B cell (primary cell): ENCODE measurements at regions of chr17 and their contacts with region 1.

Region 1: DNA sequence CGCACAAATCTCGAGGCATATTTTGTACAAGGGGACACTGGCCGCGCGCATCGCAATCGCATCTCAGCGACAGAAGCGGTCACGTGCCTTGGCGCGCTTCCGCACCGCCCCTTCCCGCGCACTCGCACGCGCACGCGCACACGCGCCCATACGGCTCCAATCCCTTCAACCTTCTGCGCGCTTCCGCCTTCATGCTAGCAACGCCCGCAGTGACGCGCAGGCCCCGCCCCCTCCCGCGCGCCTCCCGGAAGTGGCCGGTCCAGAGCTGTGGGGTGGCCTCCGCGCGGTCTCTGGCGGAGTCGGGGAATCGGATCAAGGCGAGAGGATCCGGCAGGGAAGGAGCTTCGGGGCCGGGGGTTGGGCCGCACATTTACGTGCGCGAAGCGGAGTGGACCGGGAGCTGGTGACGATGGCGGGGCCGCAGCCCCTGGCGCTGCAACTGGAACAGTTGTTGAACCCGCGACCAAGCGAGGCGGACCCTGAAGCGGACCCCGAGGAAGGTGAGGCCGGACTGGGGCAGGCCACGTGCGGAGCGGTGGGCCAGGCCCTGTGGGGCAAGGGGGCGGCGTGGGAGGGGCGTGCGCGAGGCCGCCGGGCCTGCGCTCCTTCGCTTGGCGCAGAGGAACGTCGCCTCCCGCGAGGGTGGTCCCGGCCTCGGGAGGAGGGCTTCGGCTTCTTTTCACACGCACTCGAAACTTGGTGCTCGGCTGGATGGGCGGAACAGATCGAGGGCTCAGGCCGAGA is at the start of gene AATF:
- DNase-seq: peak; percentile 98
- ATAC-seq: peak; percentile 97
- H3K4me3 ChIP-seq: peak within 1 kb of the TSS; percentile 70 to 96 (median 85)
- H3K4me3 Mint-ChIP-seq: peak within 1 kb of the TSS; percentile 96
- H3K27ac ChIP-seq: peak within 1 kb of the TSS; percentile 77 to 86
- H3K27ac Mint-ChIP-seq: peak within 1 kb of the TSS; percentile 90
- H3K4me1 ChIP-seq: peaks cover 25 to 47% of the 10 kb centered on the region in 2 donors
- H3K4me1 Mint-ChIP-seq: peaks cover 50% of the 10 kb centered on the region
- H3K27me3 ChIP-seq: peaks cover 0 to 39% (median 37%) of the 10 kb centered on the region in 4 experiments
- H3K27me3 Mint-ChIP-seq: peaks cover 30% of the 10 kb centered on the region
- CTCF ChIP-seq: no peak
- total RNA-seq, gene AATF: 49.6 and 54.8 TPM in 2 replicates

Region 2: DNA sequence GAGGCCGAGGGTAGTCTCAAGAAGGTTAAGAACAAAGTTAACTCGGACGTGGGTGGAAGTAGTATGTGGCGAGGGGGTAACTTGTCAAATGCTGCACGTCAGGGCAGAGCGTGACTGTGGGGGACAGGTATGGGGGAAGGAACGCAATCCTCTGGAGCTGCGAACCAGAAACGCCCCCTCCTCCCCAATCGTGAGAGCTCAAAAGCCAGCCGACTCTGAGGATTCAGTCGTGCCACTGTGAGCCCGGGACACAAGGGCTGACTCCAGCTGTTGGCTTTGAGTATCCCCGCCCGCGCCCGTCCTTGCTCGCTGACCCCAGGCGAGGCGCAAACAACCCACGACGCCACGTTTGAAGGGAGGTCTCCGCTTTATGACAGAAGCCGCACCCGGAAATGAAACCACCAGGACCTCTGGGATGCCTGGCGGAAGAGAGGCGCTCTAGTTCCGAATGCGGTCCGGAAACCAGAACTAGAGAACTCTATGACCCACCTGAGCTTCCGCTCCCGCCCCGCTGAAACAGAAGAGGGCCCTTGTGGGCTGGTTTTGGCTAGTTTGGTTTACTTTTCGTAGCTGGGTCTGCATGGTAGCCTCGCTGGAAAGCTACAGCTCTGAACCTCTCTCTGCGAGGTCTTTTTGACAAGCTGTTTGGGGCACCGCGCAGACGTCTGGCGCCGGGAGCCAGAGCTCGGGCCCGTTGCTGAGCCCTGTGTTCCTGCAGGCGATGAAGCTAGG is 1370.5 kb before region 1 on chr17 and contains the start of gene PEX12:
- CTCF ChIA-PET with region 1: no interaction called
- POLR2A ChIA-PET with region 1: no interaction called
- intact Hi-C with region 1: loop called (anchors 5 kb)
- DNase-seq: peak; percentile 94
- ATAC-seq: peak; percentile 95
- H3K4me3 ChIP-seq: peak within 1 kb of the TSS; percentile 80 to 99 (median 95)
- H3K4me3 Mint-ChIP-seq: peak within 1 kb of the TSS; percentile 97
- H3K27ac ChIP-seq: peak within 1 kb of the TSS; percentile 86 to 89
- H3K27ac Mint-ChIP-seq: peak within 1 kb of the TSS; percentile 98
- H3K4me1 ChIP-seq: peaks cover 16 to 20% of the 10 kb centered on the region in 2 donors
- H3K4me1 Mint-ChIP-seq: peaks cover 25% of the 10 kb centered on the region
- H3K27me3 ChIP-seq: no peaks in the 10 kb centered on the region
- H3K27me3 Mint-ChIP-seq: no peaks in the 10 kb centered on the region
- CTCF ChIP-seq: no peak
- total RNA-seq, gene PEX12: 5.1 and 5.5 TPM in 2 replicates

Region 3: DNA sequence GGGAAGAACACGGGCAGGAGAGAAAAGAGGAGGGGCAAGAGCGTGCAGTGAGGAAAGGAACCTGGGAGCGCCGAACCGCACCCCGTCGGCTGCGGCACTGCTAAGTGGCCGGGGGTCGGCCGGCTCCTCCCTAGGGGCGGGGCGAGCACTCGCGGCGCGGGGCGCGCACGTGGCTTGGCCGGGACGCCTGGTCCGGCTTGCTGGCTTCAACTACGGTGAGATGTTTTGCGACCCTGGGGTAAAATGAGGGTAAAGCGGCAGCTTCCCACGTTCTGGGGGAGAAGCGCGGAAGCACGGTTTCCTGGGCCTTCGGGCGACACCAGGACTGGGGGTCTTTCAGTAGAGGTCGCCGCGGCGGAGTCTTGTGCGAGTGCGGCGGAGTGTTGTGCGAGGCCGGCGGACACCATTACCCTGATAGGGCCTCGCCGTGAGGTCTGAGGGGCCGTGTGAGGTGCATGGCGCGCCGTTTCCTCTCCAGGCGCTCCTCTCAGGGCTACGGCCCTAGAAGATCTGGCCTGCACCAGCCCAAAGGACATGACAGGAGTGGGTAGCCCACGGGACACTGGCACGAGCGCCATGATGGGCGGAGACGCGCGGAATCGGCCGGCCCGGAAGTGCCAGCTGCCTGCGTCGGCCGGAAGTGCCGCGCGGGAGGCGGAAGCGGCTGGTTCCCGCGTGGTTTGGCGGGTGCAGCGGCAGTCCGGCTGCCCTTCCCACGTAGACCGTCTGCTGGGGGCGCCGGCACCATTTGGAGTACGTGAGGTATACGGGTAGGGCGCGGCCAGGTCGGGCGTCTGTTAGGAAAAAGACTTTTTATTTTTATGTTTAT is 413.8 kb before region 1 on chr17 and contains the starts of genes MYO19 and PIGW:
- CTCF ChIA-PET with region 1: no interaction called
- POLR2A ChIA-PET with region 1: no interaction called
- intact Hi-C with region 1: loop called (anchors 2 kb)
- DNase-seq: peak; percentile 93
- ATAC-seq: peak; percentile 78
- H3K4me3 ChIP-seq: peak within 1 kb of the TSS; percentile 62 to 99 (median 94)
- H3K4me3 Mint-ChIP-seq: peak within 1 kb of the TSS; percentile 96
- H3K27ac ChIP-seq: peak within 1 kb of the TSS; percentile 96 to 97
- H3K27ac Mint-ChIP-seq: peak within 1 kb of the TSS; percentile 99
- H3K4me1 ChIP-seq: peaks cover 9 to 18% of the 10 kb centered on the region in 2 donors
- H3K4me1 Mint-ChIP-seq: peaks cover 21% of the 10 kb centered on the region
- H3K27me3 ChIP-seq: no peaks in the 10 kb centered on the region
- H3K27me3 Mint-ChIP-seq: no peaks in the 10 kb centered on the region
- CTCF ChIP-seq: no peak
- total RNA-seq, gene MYO19: 65.7 and 76.8 TPM in 2 replicates
- total RNA-seq, gene PIGW: 5.9 and 6.3 TPM in 2 replicates

Region 4: GRCh38 chr17:36601303-36602029 is 347.4 kb before region 1 on chr17 and contains the start of gene MRM1:
- CTCF ChIA-PET with region 1: no interaction called
- POLR2A ChIA-PET with region 1: no interaction called
- intact Hi-C with region 1: loop called (anchors 1 kb)
- DNase-seq: peak; percentile 93
- ATAC-seq: peak; percentile 88
- H3K4me3 ChIP-seq: peak within 1 kb of the TSS; percentile 55 to 100 (median 90)
- H3K4me3 Mint-ChIP-seq: peak within 1 kb of the TSS; percentile 92
- H3K27ac ChIP-seq: peak within 1 kb of the TSS; percentile 56 to 69
- H3K27ac Mint-ChIP-seq: peak within 1 kb of the TSS; percentile 93
- H3K4me1 ChIP-seq: peaks cover 11 to 25% of the 10 kb centered on the region in 2 donors
- H3K4me1 Mint-ChIP-seq: peaks cover 40% of the 10 kb centered on the region
- H3K27me3 ChIP-seq: no peaks in the 10 kb centered on the region
- H3K27me3 Mint-ChIP-seq: no peaks in the 10 kb centered on the region
- CTCF ChIP-seq: no peak
- total RNA-seq, gene MRM1: 13.5 and 14.4 TPM in 2 replicates

Region 5: GRCh38 chr17:36791150-36791941 is 157.5 kb before region 1 on chr17:
- CTCF ChIA-PET with region 1: no interaction called
- POLR2A ChIA-PET with region 1: no interaction called
- intact Hi-C with region 1: no loop called
- DNase-seq: no peak
- ATAC-seq: no peak
- H3K4me3 ChIP-seq: no peak overlapping the region
- H3K4me3 Mint-ChIP-seq: no peak overlapping the region
- H3K27ac ChIP-seq: no peak overlapping the region
- H3K27ac Mint-ChIP-seq: no peak overlapping the region
- H3K4me1 ChIP-seq: no peaks in the 10 kb centered on the region
- H3K4me1 Mint-ChIP-seq: no peaks in the 10 kb centered on the region
- H3K27me3 ChIP-seq: peaks cover 0 to 13% (median 0%) of the 10 kb centered on the region in 4 experiments
- H3K27me3 Mint-ChIP-seq: peaks cover 39% of the 10 kb centered on the region
- CTCF ChIP-seq: no peak

Region 6: DNA sequence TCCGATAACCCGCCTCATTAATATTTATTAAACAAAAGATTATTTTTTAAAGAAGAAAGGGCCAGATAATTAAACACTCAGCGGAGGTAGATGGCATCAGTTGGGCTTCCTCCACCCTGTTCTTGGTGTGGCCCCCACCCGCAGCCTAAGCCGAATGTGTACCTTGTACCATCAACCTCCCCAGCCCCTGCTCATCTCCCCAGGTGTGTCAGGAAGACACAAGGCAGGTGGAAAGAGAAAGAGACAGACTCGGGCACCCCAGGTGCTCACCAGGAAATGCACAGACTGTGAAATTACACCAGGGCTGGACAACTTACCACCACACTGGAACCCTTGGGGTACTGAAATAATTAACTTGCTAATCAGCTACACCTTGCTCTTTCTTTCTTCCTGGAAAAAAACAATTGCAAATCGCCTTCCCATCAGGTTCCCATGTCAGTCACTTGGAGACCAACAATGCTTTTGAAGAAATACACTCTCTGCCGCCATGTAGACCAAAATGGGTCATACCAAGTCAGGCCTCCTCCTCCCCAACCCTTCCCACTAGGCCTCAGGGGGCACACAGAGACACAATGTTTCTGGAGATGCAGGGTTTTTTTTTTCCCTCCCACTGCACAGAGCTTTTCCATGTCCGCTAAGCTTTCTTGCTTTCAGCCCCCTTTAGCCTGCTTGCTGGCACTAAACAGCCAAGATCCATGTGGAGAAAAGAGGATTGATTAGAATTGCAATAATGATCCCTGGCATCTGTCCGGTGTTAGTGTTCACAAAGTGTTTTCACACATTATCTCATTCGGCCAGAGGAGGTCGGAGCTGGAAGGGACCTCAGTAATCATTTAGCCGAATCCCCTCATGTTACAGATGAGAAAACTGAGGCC is 20.2 kb before region 1 on chr17:
- CTCF ChIA-PET with region 1: no interaction called
- POLR2A ChIA-PET with region 1: no interaction called
- intact Hi-C with region 1: loop called (anchors 2 kb)
- DNase-seq: no peak
- ATAC-seq: no peak
- H3K4me3 ChIP-seq: peak overlapping the region in 4 of 5 experiments; percentile 14 to 47 (median 34)
- H3K4me3 Mint-ChIP-seq: peak overlapping the region; percentile 85
- H3K27ac ChIP-seq: no peak overlapping the region
- H3K27ac Mint-ChIP-seq: no peak overlapping the region
- H3K4me1 ChIP-seq: peaks cover 45 to 48% of the 10 kb centered on the region in 2 donors
- H3K4me1 Mint-ChIP-seq: peaks cover 45% of the 10 kb centered on the region
- H3K27me3 ChIP-seq: peaks cover 0 to 54% (median 48%) of the 10 kb centered on the region in 4 experiments
- H3K27me3 Mint-ChIP-seq: peaks cover 57% of the 10 kb centered on the region
- CTCF ChIP-seq: no peak

Region 7: GRCh38 chr17:38351412-38352222 is 1402.7 kb after region 1 on chr17 and contains the start of gene SOCS7:
- CTCF ChIA-PET with region 1: interaction called, 3 read pairs
- POLR2A ChIA-PET with region 1: no interaction called
- intact Hi-C with region 1: loop called (anchors 5 kb)
- DNase-seq: peak; percentile 94
- ATAC-seq: peak; percentile 92
- H3K4me3 ChIP-seq: peak within 1 kb of the TSS; percentile 38 to 78 (median 70)
- H3K4me3 Mint-ChIP-seq: peak within 1 kb of the TSS; percentile 99
- H3K27ac ChIP-seq: peak within 1 kb of the TSS; percentile 71 to 73
- H3K27ac Mint-ChIP-seq: peak within 1 kb of the TSS; percentile 97
- H3K4me1 ChIP-seq: peaks cover 11 to 19% of the 10 kb centered on the region in 2 donors
- H3K4me1 Mint-ChIP-seq: peaks cover 31% of the 10 kb centered on the region
- H3K27me3 ChIP-seq: no peaks in the 10 kb centered on the region
- H3K27me3 Mint-ChIP-seq: no peaks in the 10 kb centered on the region
- CTCF ChIP-seq: no peak
- total RNA-seq, gene SOCS7: 20.8 and 23.3 TPM in 2 replicates